Posterior cingulate gyrus (tissue), 11 donors: ENCODE measurements at regions of chr17 and their contacts with region 1.

Region 1: GRCh38 chr17:65556014-65556909 is 5.2 kb downstream of the AXIN2 start:
- DNase-seq: peak; percentile 69 to 96 (median 86)

Region 2: GRCh38 chr17:65294179-65294720 is 262.0 kb before region 1 on chr17:
- intact Hi-C with region 1: loop called (anchors 5 kb)
- DNase-seq: peak; percentile 35 to 95 (median 63)

Region 3: GRCh38 chr17:65455972-65456343 is 100.3 kb before region 1 on chr17:
- intact Hi-C with region 1: loop called (anchors 5 kb)
- DNase-seq: peak in 1 of 10 donors; percentile 17

Region 4: GRCh38 chr17:66165513-66166123 is 609.4 kb after region 1 on chr17:
- intact Hi-C with region 1: loop called (anchors 5 kb)
- DNase-seq: no peak